HCT116 (cell line): ENCODE measurements at regions of chr10 and their contacts with region 1.

Region 1: DNA sequence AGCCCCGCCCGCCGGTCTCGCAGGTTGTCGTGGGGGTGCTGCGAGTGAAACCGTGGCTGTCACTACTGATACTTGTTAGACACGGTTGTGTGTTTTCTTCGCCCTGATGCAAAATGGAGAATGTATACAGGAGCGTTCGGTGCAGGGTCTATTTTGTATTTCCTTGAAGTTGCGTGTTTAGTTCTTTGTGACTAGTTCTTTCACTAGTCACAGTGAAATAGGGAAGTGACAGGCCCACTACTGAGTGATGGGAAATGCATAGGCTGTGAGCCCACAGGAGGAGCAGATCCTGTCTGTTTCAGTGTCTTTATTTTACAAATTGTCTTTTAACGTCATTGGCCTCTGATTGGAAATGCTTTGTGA is 675 bp downstream of the ABRAXAS2 start:
- DNase-seq: no peak
- ATAC-seq: peak; percentile 17
- H3K4me3 ChIP-seq: peak overlapping the region; percentile 97 to 98
- H3K27ac ChIP-seq: peak overlapping the region; percentile 75
- H3K4me1 ChIP-seq: peaks cover 9 to 15% of the 10 kb centered on the region in 2 experiments; a peak in 2 of 4 replicates
- H3K27me3 ChIP-seq: no peaks in the 10 kb centered on the region
- CTCF ChIP-seq: no peak
- POLR2A ChIP-seq: no peak
- RAD21 ChIP-seq: no peak

Region 2: GRCh38 chr10:124791378-124792348 is 10.6 kb before region 1 on chr10 and contains the start of gene EEF1AKMT2:
- CTCF ChIA-PET with region 1: no interaction called
- POLR2A ChIA-PET with region 1: interaction called, 17 read pairs
- RAD21 ChIA-PET with region 1: no interaction called
- intact Hi-C with region 1: no loop called
- DNase-seq: peak; percentile 86
- ATAC-seq: peak; percentile 94
- H3K4me3 ChIP-seq: peak within 1 kb of the TSS; percentile 100
- H3K27ac ChIP-seq: peak within 1 kb of the TSS; percentile 83
- H3K4me1 ChIP-seq: peaks cover 10 to 15% of the 10 kb centered on the region in 2 experiments; a peak in 3 of 4 replicates
- H3K27me3 ChIP-seq: no peaks in the 10 kb centered on the region
- CTCF ChIP-seq: peak in 1 of 3 experiments; percentile 39; a peak in 4 of 6 replicates
- POLR2A ChIP-seq: peak; percentile 94
- RAD21 ChIP-seq: 0 out of 2 replicates have a peak, but pooled peaks have one; percentile 9
- total RNA-seq, gene EEF1AKMT2: 39.6 TPM

Region 3: GRCh38 chr10:125102231-125102630 is 299.9 kb after region 1 on chr10:
- CTCF ChIA-PET with region 1: no interaction called
- POLR2A ChIA-PET with region 1: no interaction called
- RAD21 ChIA-PET with region 1: no interaction called
- intact Hi-C with region 1: no loop called
- DNase-seq: no peak
- ATAC-seq: peak; percentile 17; the same call in 1 of the 2 replicates
- H3K4me3 ChIP-seq: no peak overlapping the region
- H3K27ac ChIP-seq: no peak overlapping the region
- H3K4me1 ChIP-seq: peaks cover 8 to 17% of the 10 kb centered on the region in 2 experiments; a peak in 3 of 4 replicates
- H3K27me3 ChIP-seq: no peaks in the 10 kb centered on the region
- CTCF ChIP-seq: no peak
- POLR2A ChIP-seq: no peak
- RAD21 ChIP-seq: no peak

Region 4: GRCh38 chr10:125123476-125124114 is 321.3 kb after region 1 on chr10:
- CTCF ChIA-PET with region 1: no interaction called
- POLR2A ChIA-PET with region 1: no interaction called
- RAD21 ChIA-PET with region 1: no interaction called
- intact Hi-C with region 1: no loop called
- DNase-seq: peak; percentile 96
- ATAC-seq: peak; percentile 84
- H3K4me3 ChIP-seq: peak overlapping the region; percentile 0 to 42
- H3K27ac ChIP-seq: peak overlapping the region; percentile 80
- H3K4me1 ChIP-seq: peaks cover 66 to 84% of the 10 kb centered on the region in 2 experiments
- H3K27me3 ChIP-seq: no peaks in the 10 kb centered on the region
- CTCF ChIP-seq: no peak
- POLR2A ChIP-seq: no peak
- RAD21 ChIP-seq: no peak